Activated CD8-positive, alpha-beta T cell treated with anti-CD3 and anti-CD28 coated beads for 36 hours (primary cell): ENCODE measurements at regions of chr1 and their contacts with region 1.

Region 1: GRCh38 chr1:219173758-219174588 is at the start of gene LYPLAL1:
- DNase-seq: peak; percentile 90
- ATAC-seq: peak; percentile 89
- H3K4me3 Mint-ChIP-seq: peak within 1 kb of the TSS; percentile 86
- H3K27ac Mint-ChIP-seq: peak within 1 kb of the TSS; percentile 93
- H3K4me1 Mint-ChIP-seq: peaks cover 36% of the 10 kb centered on the region
- H3K27me3 Mint-ChIP-seq: no peaks in the 10 kb centered on the region
- CTCF ChIP-seq: no peak
- total RNA-seq, gene LYPLAL1: 24.5 to 30.0 TPM

Region 2: DNA sequence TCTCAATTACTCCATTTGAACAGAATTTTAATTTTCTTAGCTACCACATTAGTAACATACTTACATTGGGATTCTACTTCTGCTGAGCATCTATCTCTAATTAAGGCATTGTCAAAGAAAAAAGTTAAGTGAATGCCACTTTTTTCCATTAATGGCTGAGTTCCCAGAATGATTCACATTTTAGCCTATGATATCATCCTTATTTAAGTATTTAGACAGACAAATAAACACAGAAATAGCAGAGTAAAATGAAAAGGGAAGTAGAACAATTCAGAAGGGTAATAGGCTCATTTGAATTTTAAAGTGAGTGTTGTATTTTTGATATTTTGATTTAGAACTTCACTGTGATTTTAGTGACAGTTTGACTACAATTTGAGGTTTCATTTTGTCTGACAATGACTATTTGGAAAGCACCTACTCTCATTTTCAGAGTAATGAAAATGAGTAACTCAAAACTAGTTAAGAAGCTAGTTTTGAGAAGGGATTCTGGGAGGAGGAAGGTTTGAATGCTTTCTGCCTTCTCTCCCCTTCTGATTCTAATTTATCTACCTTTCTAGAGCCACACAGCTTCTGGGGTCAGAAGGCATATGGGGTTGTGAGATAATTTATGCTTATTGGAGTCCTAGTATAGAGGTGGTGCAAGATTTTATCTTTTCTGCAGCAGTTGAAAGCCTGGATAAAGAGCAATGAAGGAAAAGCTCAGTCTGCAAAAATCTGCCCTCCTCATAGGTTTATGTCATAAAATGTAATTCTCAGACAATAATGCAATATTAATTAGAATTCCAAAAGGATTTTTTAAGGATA is 15.2 kb after region 1 on chr1:
- CTCF ChIA-PET with region 1: interaction called, 19 read pairs
- POLR2A ChIA-PET with region 1: interaction called, 11 read pairs
- intact Hi-C with region 1: no loop called
- DNase-seq: peak; percentile 1
- ATAC-seq: peak; percentile 83
- H3K4me3 Mint-ChIP-seq: peak overlapping the region; percentile 46
- H3K27ac Mint-ChIP-seq: peak overlapping the region; percentile 82
- H3K4me1 Mint-ChIP-seq: peaks cover 33% of the 10 kb centered on the region
- H3K27me3 Mint-ChIP-seq: no peaks in the 10 kb centered on the region
- CTCF ChIP-seq: no peak